ENCODE measurements at regions of chr19 and their contacts with region 1.

Region 1: GRCh38 chr19:49937750-49938381 is 8.6 kb upstream of the NUP62 start:
- DNase-seq: peak; percentile 81
- ATAC-seq: peak; percentile 80 to 91
- H3K4me3 ChIP-seq: peak overlapping the region; percentile 51
- H3K27ac ChIP-seq: peak overlapping the region in 1 of 2 experiments; percentile 49; a peak in 3 of 6 replicates
- H3K4me1 ChIP-seq: peaks cover 14% of the 10 kb centered on the region; the same call in 2 of the 3 replicates
- CTCF ChIP-seq: peak; percentile 99
- EP300 ChIP-seq: no peak
- POLR2A ChIP-seq: no peak
- RAD21 ChIP-seq: peak; percentile 99

Region 2: GRCh38 chr19:49911381-49912145 is 26.3 kb before region 1 on chr19:
- CTCF ChIA-PET with region 1: interaction called, 14 read pairs
- POLR2A ChIA-PET with region 1: no interaction called
- DNase-seq: no peak
- ATAC-seq: no peak
- H3K4me3 ChIP-seq: no peak overlapping the region
- H3K27ac ChIP-seq: 0 out of 6 replicates have a peak overlapping the region, but pooled peaks of 1 of the 2 experiments have one; percentile 2
- H3K4me1 ChIP-seq: no peaks in the 10 kb centered on the region
- CTCF ChIP-seq: no peak
- EP300 ChIP-seq: no peak
- POLR2A ChIP-seq: no peak
- RAD21 ChIP-seq: no peak

Region 3: DNA sequence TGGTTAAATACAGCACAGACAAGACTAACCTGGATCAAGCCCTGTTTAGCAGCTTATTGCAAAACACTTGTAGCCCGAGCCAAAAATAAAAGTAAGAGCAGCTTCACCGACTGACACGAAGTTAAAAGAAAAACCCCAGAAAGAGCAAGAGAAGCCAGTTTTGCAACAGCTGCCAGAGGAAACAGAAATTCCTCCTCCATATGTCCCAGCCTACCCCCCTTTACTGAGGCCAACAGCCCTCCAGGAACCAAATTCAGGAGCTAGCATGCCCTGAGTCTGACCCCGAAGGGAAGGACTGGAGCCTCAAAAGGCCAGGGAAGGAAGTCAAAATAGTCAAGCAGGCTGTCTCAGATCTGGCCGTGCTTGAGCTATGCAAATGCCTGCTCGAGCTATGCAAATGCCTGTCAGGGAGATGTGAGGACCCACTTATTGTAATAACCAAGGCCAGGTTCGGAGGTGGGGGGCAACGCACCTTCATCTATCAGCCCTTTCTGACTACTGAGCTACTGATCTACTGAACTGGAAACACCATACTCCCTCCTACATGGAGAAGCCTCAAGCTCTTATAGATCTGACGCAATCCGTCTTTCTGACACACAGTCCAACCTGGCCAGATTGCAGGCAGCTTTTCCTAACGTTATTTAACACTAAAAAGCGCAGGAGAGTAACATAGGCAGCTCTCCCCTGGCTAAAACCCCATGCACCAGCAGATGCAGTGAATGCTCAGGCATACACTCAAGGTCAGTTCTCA is 16.4 kb after region 1 on chr19:
- CTCF ChIA-PET with region 1: interaction called, 121 read pairs
- POLR2A ChIA-PET with region 1: no interaction called
- DNase-seq: no peak
- ATAC-seq: no peak
- H3K4me3 ChIP-seq: no peak overlapping the region
- H3K27ac ChIP-seq: no peak overlapping the region
- H3K4me1 ChIP-seq: no peaks in the 10 kb centered on the region
- CTCF ChIP-seq: no peak
- EP300 ChIP-seq: no peak
- POLR2A ChIP-seq: no peak
- RAD21 ChIP-seq: no peak

Region 4: DNA sequence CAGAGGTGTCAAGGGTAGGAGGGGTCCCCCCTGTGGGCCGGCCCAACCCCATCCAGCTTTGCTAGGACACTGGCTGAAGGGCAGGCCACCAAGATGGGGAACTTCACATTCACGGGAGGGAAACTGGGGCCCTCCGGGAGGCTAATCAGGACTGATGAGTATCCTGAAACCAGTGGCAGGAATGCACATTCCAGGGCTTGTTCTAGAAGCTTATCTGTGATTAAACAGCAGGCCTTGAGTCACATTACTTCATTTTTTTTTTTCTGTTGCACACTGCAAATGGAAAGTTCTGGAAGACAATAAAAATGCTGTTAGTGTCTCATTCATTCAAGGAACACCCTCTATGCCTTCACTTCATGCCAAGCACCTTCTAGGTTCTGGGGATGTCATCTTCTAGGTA is 38.6 kb after region 1 on chr19:
- CTCF ChIA-PET with region 1: interaction called, 78 read pairs
- POLR2A ChIA-PET with region 1: no interaction called
- DNase-seq: no peak
- ATAC-seq: no peak
- H3K4me3 ChIP-seq: no peak overlapping the region
- H3K27ac ChIP-seq: no peak overlapping the region
- H3K4me1 ChIP-seq: no peaks in the 10 kb centered on the region
- CTCF ChIP-seq: no peak
- EP300 ChIP-seq: no peak
- POLR2A ChIP-seq: no peak
- RAD21 ChIP-seq: no peak

Region 5: GRCh38 chr19:49983645-49984229 is 45.9 kb after region 1 on chr19:
- CTCF ChIA-PET with region 1: interaction called, 78 read pairs
- POLR2A ChIA-PET with region 1: no interaction called
- DNase-seq: peak; percentile 57 to 70
- ATAC-seq: peak; percentile 55 to 84; a peak in 5 of 6 replicates
- H3K4me3 ChIP-seq: no peak overlapping the region
- H3K27ac ChIP-seq: no peak overlapping the region
- H3K4me1 ChIP-seq: no peaks in the 10 kb centered on the region
- CTCF ChIP-seq: peak; percentile 92
- EP300 ChIP-seq: no peak
- POLR2A ChIP-seq: no peak
- RAD21 ChIP-seq: peak; percentile 73 to 88

Region 6: DNA sequence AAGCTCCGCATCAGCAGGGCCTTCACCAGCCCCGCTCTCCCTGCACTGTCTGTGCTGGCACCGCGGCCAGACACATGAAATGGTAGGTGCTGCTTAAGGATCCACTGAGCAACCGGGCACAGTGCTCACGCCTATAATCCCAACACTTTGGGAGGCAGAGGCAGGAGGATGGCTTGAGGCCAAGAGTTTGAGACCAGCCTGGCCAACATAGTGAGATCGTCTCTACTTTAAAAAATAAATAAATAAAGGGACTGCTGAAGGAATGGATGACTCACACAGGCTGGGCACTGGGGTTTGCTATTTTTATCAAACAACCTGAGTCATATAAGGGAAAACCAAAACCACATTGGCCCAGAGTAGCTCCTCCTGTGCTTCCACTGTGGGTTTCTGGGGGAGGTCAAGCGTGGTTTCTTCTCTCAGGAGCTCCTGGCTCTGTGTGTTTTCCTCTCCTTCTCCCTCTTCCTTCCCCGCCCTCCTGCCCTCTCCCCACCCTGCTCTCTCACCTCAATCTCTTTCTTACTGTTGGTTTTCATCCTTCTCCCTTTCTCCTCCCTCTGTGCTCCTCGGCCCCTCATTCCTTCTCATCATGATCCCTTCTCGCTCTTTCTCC is 66.0 kb after region 1 on chr19:
- CTCF ChIA-PET with region 1: interaction called, 24 read pairs
- POLR2A ChIA-PET with region 1: no interaction called
- DNase-seq: peak; percentile 86 to 93
- ATAC-seq: peak; percentile 87 to 93
- H3K4me3 ChIP-seq: no peak overlapping the region
- H3K27ac ChIP-seq: peak overlapping the region; percentile 59 to 82; a peak in 5 of 6 replicates
- H3K4me1 ChIP-seq: peaks cover 17% of the 10 kb centered on the region
- CTCF ChIP-seq: no peak
- EP300 ChIP-seq: no peak
- POLR2A ChIP-seq: no peak
- RAD21 ChIP-seq: no peak

Region 7: GRCh38 chr19:50025024-50025789 is 87.3 kb after region 1 on chr19 and contains the start of gene VRK3:
- CTCF ChIA-PET with region 1: interaction called, 14 read pairs
- POLR2A ChIA-PET with region 1: no interaction called
- DNase-seq: peak; percentile 100
- ATAC-seq: peak; percentile 88 to 94
- H3K4me3 ChIP-seq: peak within 1 kb of the TSS; percentile 77
- H3K27ac ChIP-seq: peak within 1 kb of the TSS; percentile 87 to 92
- H3K4me1 ChIP-seq: peaks cover 20% of the 10 kb centered on the region
- CTCF ChIP-seq: no peak
- EP300 ChIP-seq: no peak
- POLR2A ChIP-seq: peak; percentile 81
- RAD21 ChIP-seq: no peak; a peak in 1 of 5 replicates
- polyA plus RNA-seq, gene VRK3: 37.4 and 45.2 TPM in 2 replicates